ENCODE measurements at regions of chr9 and their contacts with region 1.

Region 1: DNA sequence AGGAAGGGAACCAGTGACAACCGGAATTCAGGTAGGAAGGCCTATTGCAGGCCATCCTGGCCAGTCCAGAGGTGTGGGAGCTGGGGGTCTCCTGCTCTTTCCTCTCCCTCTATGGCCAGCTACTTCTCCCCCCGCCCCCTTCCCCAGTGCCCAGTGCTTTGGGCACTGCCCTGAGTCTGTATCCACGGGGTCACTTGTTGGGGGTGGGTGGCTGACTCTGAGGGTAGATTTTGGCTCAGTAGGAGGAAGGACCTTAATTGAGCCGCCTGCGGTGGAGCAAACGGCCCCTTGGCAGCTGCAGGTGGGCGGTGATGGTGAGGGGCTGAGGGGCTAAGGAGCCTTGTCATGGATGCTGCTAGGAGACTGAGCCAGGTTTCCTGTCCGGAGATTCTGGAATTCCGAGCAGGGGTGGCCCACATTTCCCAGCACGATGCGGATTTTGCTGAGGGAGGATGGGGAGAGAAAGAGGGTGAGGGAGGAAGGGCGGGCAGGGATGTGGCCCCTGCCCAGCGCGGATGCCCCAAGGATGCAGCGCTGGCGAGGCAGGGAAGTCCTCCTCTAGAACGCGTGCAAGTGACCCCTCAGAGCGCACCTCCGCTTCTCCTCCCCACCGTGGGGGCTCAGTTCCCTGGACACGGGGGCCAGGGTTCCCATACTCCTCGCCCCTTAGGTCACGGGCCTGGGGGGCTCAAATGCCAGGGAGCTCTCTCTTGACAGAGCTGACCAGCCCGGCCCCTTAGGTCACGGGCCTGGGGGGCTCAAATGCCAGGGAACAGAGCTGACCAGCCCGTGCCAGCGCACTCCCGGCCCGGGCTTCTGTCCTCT is 1.2 kb upstream of the PHF2 start:
- DNase-seq: no peak
- ATAC-seq: peak; percentile 47; the same call in 1 of the 2 replicates
- H3K4me3 ChIP-seq: peak overlapping the region; percentile 52 to 59
- H3K27ac ChIP-seq: peak overlapping the region; percentile 69; the same call in 1 of the 2 replicates
- H3K4me1 ChIP-seq: peaks cover 10% of the 10 kb centered on the region
- H3K27me3 ChIP-seq: no peaks in the 10 kb centered on the region
- CTCF ChIP-seq: no peak

Region 2: GRCh38 chr9:93268551-93269314 is 306.4 kb before region 1 on chr9:
- CTCF ChIA-PET with region 1: no interaction called
- POLR2A ChIA-PET with region 1: no interaction called
- in situ Hi-C with region 1: no loop called
- intact Hi-C with region 1: no loop called
- DNase-seq: no peak
- ATAC-seq: no peak
- H3K4me3 ChIP-seq: no peak overlapping the region
- H3K27ac ChIP-seq: no peak overlapping the region
- H3K4me1 ChIP-seq: no peaks in the 10 kb centered on the region
- H3K27me3 ChIP-seq: no peaks in the 10 kb centered on the region
- CTCF ChIP-seq: no peak

Region 3: GRCh38 chr9:93827545-93828330 is 252.6 kb after region 1 on chr9:
- CTCF ChIA-PET with region 1: no interaction called
- POLR2A ChIA-PET with region 1: interaction called, 16 read pairs
- in situ Hi-C with region 1: no loop called
- intact Hi-C with region 1: no loop called
- DNase-seq: no peak
- ATAC-seq: peak; percentile 98
- H3K4me3 ChIP-seq: peak overlapping the region in 1 of 2 experiments; percentile 38; a peak in 3 of 4 replicates
- H3K27ac ChIP-seq: no peak overlapping the region
- H3K4me1 ChIP-seq: no peaks in the 10 kb centered on the region
- H3K27me3 ChIP-seq: no peaks in the 10 kb centered on the region
- CTCF ChIP-seq: peak; percentile 92

Measured in Panc1 (cell line).